ENCODE measurements at regions of chr9 and their contacts with region 1.

Region 1: DNA sequence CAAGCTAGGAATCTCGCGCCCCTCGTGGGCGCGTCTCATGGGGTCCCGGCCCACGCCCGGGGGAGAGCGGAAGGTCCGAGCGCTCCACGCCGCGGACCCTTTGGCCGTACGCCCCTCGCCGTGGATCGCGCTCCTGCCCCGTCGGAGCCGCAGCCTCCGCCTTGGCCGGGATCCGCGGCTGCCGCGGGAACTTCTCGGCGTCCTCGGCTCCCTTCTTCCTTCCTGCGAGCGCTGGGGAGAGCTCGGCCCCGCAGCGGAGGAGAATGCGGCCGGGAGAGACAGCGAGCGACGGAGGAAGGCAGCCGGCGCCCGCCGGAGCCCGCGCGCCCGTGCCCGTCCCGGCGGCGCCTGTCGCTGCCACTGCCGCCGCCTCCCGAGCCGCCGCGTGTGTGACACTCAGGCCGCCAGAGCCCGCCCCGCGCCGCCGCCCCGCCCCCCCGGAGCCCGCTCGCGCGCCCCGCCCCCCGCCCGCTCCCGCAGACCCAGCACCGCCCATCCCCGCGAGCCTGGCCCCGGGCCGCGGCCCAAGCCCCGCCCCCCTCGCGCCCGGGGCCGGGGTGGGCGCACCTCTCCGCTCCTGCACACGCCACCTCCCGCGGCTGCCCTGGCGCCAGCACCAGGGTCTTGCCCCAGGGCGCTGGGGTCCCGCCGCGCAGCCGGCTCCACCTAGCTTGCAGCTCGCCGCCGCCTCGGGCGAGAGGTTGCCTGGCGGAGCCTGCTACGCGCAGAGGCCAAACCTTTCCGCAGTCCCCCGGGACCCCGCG is at the start of gene SHB:
- DNase-seq: peak; percentile 80
- ATAC-seq: peak; percentile 83
- H3K4me3 Mint-ChIP-seq: peak within 1 kb of the TSS; percentile 68
- H3K27ac Mint-ChIP-seq: peak within 1 kb of the TSS; percentile 37
- H3K4me1 Mint-ChIP-seq: peaks cover 14% of the 10 kb centered on the region
- H3K27me3 Mint-ChIP-seq: peaks cover 34% of the 10 kb centered on the region
- total RNA-seq, gene SHB: 0.23 to 1.1 TPM

Region 2: DNA sequence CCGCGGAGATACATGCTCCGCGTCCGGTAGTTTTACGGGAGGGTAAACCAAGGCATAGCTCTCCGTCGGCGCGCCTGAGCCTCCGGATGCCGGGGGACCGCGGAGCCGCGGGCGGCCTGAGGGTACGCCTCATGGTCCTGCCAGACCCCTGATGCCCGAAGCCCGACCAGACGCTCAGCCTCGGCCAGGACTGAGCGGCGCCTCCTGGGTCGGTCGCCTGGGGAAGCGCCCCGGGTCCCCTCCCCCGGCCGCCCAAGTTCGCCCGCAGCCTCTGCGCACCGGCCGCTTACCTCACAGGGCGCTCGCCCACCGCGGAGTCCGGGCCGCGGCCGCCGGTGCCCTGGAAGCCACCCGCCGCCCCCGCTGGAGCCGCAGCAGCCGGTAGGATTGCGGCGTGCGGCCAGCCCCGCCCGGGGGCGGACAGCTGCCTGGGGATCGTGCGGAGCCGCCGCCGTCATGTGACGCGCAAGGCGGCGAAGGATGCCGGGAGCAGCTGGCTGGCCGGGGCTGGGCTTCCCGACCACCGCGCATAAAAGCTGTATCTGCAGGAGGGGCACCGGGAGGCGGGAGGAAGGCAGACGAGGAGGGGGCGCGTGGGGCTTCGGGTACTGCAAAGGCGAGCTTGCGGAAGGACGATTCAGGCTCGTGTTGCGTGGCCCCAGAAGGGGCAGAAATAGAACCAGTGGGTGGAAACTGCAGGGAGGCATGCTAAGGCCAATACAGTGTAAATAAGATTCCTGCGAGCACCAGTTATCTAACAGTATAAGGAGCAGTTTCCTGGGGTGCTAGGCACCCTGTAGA is 492.9 kb before region 1 on chr9 and contains the start of gene FBXO10:
- CTCF ChIA-PET with region 1: no interaction called
- DNase-seq: peak; percentile 55
- ATAC-seq: peak; percentile 86
- H3K4me3 Mint-ChIP-seq: peak within 1 kb of the TSS; percentile 79
- H3K27ac Mint-ChIP-seq: no peak within 1 kb of the TSS
- H3K4me1 Mint-ChIP-seq: peaks cover 14% of the 10 kb centered on the region
- H3K27me3 Mint-ChIP-seq: peaks cover 7% of the 10 kb centered on the region
- total RNA-seq, gene FBXO10: 1.3 to 2.6 TPM

Region 3: DNA sequence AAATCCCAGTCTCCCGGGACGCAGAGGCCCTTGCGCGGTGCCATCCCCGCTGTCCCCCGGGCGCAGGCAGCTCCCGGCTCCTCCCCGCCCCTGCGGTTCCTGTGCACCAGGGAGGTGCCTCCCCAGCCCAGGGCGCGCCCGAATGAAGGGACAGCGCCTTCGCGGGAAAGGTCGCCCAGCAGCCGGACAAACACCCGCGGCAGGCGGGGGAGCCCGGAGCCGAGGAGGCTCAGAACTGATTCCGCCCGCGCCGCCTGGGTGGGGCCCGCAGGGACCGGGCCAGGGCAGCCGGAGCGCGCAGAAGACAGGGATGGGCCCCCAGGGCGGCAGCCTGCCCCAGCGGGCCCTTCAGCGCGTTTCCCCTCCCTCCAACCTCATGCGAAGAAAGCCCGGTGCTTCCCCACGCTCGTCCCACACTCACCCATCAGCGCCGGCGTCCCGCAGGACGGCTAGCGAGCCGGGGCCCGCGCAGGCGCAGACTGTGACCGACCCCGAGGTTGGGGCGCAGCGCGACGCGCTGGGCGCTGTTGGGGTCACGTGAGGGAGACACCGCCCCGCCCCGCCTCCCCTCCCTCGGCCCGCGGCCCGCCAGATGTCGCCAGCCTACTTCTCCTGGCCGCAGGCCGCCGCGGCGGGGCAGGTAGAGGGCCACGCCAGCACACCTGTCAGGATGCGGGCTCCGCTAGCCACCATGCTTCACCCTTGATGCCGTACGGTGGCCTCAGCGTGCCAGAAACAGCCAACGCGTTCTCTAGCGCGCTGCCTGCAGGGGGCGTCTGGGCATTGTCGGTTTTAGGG is 165.2 kb before region 1 on chr9 and contains the start of gene SLC25A51:
- CTCF ChIA-PET with region 1: interaction called, 14 read pairs
- DNase-seq: peak; percentile 95
- ATAC-seq: peak; percentile 89
- H3K4me3 Mint-ChIP-seq: peak within 1 kb of the TSS; percentile 79
- H3K27ac Mint-ChIP-seq: peak within 1 kb of the TSS; percentile 82
- H3K4me1 Mint-ChIP-seq: peaks cover 23% of the 10 kb centered on the region
- H3K27me3 Mint-ChIP-seq: no peaks in the 10 kb centered on the region
- total RNA-seq, gene SLC25A51: 28.3 to 30.0 TPM

Region 4: DNA sequence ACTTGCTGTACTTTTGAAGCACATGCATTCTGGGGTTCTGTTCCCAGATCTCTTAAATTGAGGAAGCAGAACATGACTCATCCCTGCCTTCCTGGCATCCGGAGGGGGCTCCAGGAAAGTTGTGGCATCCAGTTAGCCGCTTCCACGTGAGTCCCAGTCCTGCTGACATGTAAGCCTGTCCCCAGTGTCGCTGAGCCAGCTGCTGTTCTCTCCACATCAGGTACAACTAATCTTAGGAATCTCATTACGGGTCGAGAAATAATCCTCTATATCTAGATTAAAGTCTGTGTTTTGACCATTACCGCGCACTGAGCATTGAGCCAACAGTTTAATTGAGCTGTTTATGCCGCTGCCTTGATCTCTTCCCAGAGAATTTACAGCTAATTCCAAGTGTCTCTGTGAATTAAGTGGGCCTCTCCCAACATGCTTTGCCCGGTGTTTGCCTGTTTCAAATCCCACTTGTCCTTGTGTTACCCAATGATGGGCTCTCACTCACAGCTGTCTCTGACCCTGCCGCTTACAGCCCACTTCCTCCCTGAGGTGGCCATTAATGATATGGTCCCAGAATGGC is 10.5 kb after region 1 on chr9:
- CTCF ChIA-PET with region 1: no interaction called
- DNase-seq: peak; percentile 12
- ATAC-seq: no peak
- H3K4me3 Mint-ChIP-seq: no peak overlapping the region
- H3K27ac Mint-ChIP-seq: no peak overlapping the region
- H3K4me1 Mint-ChIP-seq: no peaks in the 10 kb centered on the region
- H3K27me3 Mint-ChIP-seq: peaks cover 24% of the 10 kb centered on the region